ENCODE measurements at regions of chr1 and their contacts with region 1.

Region 1: GRCh38 chr1:159071970-159072582 is 4.5 kb downstream of the AIM2 start:
- DNase-seq: peak; percentile 40 to 69
- ATAC-seq: peak; percentile 84 to 86
- H3K4me3 ChIP-seq: no peak overlapping the region
- H3K27ac ChIP-seq: no peak overlapping the region
- H3K4me1 ChIP-seq: no peaks in the 10 kb centered on the region
- CTCF ChIP-seq: peak; percentile 65
- EP300 ChIP-seq: no peak
- POLR2A ChIP-seq: no peak
- RAD21 ChIP-seq: peak; percentile 65 to 75

Region 2: GRCh38 chr1:159089184-159089791 is 17.2 kb after region 1 on chr1:
- CTCF ChIA-PET with region 1: interaction called, 10 read pairs
- POLR2A ChIA-PET with region 1: no interaction called
- DNase-seq: peak in 1 of 2 experiments; percentile 17
- ATAC-seq: peak in 1 of 2 experiments; percentile 48; a peak in 1 of 6 replicates
- H3K4me3 ChIP-seq: no peak overlapping the region
- H3K27ac ChIP-seq: no peak overlapping the region
- H3K4me1 ChIP-seq: peaks cover 14% of the 10 kb centered on the region; the same call in 2 of the 3 replicates
- CTCF ChIP-seq: peak; percentile 41; the same call in 2 of the 3 replicates
- EP300 ChIP-seq: no peak
- POLR2A ChIP-seq: no peak
- RAD21 ChIP-seq: 0 out of 5 replicates have a peak, but pooled peaks of 1 of the 2 experiments have one; percentile 10

Region 3: DNA sequence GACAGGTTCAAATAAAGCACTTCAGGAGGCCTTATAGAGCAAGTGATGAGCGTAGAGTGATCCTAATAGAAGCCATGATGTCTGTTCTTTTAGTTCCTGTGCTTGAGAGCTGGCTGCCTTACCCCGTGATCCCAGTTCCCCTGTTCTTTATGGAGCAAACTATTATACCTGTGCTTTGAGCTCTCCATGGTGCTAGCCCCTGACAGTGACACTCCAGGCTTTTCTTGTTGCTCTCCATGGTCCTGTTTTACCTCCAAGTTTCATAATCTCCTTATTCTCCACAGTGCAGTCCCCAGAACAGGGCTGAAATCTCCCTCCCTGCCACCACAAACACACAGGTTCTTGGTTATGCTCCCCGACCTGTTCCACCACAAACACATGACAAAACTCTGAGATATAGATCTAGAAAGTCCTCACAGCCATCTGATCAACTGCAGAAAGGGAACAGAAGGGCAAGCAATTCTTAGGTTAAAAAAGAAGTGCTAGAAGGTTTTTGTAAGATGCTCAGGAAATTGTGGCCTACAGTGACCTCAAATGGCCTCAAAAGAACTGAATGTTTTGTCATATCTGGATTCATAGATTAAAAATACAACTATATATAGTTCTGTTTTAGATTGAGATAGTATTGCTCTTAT is 105.3 kb after region 1 on chr1:
- CTCF ChIA-PET with region 1: no interaction called
- POLR2A ChIA-PET with region 1: no interaction called
- DNase-seq: peak; percentile 40 to 60
- ATAC-seq: peak; percentile 71 to 81
- H3K4me3 ChIP-seq: no peak overlapping the region
- H3K27ac ChIP-seq: no peak overlapping the region
- H3K4me1 ChIP-seq: peaks cover 5% of the 10 kb centered on the region; the same call in 2 of the 3 replicates
- CTCF ChIP-seq: no peak
- EP300 ChIP-seq: no peak
- POLR2A ChIP-seq: no peak
- RAD21 ChIP-seq: no peak